ENCODE measurements at regions of chrX and their contacts with region 1.

Region 1: DNA sequence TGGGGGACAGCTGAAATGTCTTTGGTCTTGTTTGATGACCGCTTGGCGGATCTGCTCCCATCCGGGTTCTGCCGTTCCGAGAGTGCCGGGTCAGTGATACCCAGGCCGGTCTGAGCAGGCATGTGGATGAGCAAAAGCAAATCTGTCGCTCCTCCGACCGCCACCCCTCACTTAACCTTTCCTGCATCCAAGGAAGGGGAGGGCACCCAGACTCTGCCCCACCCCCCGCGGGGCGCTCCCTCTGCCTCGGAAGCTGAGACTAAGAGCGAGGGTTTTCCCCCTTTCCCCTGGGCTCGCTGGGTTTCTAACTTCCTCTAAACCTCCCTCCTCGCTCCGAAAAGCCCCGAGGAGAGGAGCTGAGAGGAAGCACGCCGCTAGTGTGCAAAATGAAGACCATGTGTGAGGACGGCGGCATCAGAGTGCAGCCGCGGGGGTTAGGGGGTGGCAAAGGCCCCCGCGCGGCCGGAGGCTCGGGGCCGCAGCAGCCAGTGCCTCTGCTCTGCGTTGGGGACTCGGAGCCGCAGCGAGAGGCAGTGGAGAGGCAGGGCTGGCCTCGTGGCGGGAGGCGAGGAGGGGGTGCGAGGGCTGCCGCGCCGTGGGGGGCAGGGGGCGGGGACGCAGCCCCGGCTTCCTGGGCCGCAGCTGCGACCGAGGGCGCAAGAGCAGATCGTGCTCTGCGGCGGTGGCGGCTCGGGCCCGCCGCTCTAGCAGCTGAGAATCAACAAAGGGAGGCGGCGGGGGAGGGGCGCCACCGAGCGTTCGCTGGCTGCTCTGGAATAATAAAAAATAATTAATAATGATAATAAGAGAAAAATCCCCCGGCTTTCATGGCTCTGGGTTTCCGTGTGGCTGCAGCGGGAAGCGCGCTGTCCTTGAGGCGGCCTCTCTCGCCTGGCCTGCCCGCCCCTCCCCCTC is 55.8 kb upstream of the BCOR start:
- DNase-seq: peak; percentile 80

Region 2: GRCh38 chrX:39736216-39737211 is 417.1 kb before region 1 on chrX:
- intact Hi-C with region 1: loop called (anchors 5 kb)
- DNase-seq: peak; percentile 92

Region 3: DNA sequence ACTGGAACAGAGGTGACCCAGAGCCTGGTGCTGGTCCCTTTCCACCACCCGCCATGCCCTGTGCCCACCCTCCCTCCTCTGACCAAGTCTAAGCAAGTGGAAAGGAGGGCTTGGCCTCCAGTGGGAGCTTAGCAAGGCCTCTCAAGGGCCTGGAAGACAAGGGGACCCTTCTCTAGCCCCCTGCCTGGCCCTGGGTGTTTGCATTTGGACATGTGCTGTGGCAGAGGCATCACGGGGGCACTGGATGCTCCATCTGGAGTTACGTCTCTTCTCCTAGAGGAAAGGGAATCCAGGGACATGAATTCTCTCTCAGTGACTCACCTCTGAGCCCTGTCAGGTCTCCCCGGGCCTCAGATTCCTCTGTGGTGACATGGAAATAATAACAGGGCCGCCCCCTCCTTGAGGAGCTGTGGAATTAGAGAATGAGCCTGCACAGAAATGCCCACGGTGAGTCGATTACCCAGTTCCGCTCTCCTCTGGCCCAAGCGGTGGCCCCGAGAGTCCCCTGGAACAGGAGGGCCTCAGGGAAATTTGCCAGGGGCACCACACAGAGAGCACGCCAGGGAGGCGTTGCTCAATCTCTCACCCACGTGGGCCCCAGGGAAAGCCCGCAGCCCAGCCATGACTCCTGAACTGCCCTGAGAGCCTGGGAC is 245.5 kb before region 1 on chrX:
- intact Hi-C with region 1: loop called (anchors 10 kb)
- DNase-seq: peak; percentile 81

Region 4: DNA sequence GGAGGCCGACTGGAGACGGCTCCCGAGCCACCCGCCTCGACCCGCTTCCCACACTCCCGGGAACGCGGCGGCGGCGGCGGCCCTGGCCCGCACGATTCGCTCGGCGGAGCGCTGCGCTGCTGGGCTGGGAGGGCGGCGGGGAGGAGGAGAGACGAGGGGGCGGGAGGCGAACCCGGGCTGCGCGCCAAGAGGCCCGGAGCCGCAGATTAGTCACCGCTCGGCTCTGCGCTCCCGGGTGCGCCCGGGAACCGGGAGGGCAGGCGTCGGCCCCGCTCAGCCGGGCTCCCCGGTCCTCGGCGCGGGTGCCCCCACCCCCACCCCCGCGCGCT is 44.7 kb before region 1 on chrX:
- intact Hi-C with region 1: loop called (anchors 2 kb)
- DNase-seq: peak; percentile 88

Region 5: DNA sequence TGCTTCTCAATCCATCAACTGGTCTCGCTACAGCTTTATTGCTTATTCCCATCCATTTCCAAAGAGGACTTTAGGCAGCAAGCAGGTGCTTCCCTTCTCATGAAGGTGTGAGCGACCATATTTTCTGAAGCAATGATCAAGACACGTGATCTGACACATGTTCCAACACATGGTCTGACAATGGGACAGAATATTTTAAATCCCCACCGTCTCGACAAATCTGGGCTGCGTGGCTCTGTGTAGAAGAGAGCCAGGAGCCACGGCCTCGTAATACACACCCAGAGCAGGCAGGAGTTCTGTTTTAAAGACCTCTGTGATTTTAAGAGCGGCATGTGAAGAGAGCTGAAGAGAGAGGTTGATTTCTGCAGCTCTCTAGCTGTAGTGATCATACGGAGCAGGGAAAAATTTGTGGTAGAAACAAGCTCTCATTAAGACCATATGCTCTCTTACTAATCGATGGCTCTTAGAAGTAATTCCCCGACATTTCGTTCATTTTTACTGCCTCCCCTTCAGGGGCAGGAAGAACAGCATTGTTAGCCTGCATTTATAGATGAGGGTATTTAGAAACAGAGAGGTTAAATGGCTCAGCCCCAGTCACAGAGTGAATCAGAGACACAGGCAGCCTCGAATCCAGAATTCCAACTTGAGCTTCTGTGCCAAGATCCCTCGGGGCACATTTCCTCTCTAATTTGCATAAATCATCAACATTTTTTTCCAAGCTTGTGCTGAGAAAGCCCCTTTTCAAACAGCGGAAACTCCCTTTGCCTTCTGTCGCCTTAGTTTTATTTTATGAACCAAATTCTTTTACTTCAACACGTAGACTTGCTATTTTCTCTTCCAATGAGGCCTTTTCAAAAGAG is 35.2 kb after region 1 on chrX:
- intact Hi-C with region 1: no loop called
- DNase-seq: no peak

Measured in cardiac septum (tissue), 1 donor.